Dendritic cell treated with granulocyte-macrophage colony-stimulating factor and Interleukin-4, amounts not matched to agents 40 ng/mL and 50 ng/mL, for 4 days (primary cell): ENCODE measurements at regions of chr20 and their contacts with region 1.

Region 1: DNA sequence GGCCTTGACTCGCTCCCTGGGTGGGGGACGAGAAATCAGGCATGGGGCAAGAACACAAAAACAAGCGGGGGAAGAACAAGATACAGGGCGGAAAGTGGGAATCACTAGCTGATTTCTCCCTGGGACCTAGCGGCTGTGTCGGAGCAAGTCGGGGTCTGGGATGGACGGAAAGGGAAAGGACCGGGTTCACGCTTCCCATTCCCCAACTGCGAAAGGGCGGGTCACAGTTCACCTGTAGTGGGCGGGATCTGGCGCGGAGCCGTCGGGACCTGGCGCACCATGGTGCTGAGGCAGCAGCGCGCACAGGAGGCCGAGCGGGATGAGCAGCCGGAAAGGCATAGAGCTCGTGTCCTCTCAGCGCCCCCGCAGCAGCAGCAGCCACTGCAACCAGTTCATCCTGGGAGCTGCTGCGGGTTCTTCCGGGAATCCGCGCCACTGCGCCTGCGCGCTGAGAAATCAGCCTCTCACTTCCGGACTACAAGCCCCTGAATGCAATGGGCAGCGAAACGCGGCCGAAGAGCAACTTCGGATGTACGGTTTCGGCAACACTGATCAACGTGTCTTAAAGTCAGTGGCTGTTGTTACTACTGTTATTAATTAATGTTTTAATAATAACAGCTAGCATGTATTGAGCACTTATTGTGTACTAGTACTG is at the start of gene EDEM2:
- H3K4me3 Mint-ChIP-seq: peak within 1 kb of the TSS; percentile 84
- H3K27ac Mint-ChIP-seq: peak within 1 kb of the TSS; percentile 96
- H3K4me1 Mint-ChIP-seq: peaks cover 46% of the 10 kb centered on the region
- H3K27me3 Mint-ChIP-seq: no peaks in the 10 kb centered on the region

Region 2: GRCh38 chr20:35207950-35208611 is 61.0 kb after region 1 on chr20:
- intact Hi-C with region 1: loop called (anchors 1 kb)
- H3K4me3 Mint-ChIP-seq: no peak overlapping the region
- H3K27ac Mint-ChIP-seq: no peak overlapping the region
- H3K4me1 Mint-ChIP-seq: no peaks in the 10 kb centered on the region
- H3K27me3 Mint-ChIP-seq: no peaks in the 10 kb centered on the region